GM13976 (cell line): ENCODE measurements at regions of chr15 and their contacts with region 1.

Region 1: GRCh38 chr15:50686468-50687301 is at the start of gene TRPM7:
- DNase-seq: peak; percentile 93
- CTCF ChIP-seq: no peak

Region 2: DNA sequence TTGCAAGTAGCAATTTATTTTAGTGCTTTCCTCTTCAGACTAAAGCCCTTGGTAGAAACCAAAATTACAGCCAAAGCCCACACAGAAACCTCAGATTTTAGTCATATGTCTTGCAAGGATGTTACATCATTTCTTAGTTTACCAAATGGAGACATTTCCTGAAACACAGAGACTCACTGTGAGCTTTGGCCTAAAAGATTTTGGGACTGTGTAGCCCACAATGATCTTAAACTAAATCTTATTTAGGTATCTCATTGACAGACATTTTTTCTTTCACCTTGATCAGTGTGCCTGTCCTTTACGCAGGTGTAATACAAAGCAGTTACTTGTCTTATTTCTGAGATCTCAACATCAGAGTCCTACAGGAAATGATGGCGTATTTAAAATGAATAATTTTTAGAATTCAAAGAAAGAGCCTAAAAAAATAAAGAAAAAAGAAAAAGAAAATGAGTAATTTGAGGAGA is 194.0 kb after region 1 on chr15:
- in situ Hi-C with region 1: loop called (anchors 10 kb)
- DNase-seq: peak; percentile 54
- CTCF ChIP-seq: no peak

Region 3: DNA sequence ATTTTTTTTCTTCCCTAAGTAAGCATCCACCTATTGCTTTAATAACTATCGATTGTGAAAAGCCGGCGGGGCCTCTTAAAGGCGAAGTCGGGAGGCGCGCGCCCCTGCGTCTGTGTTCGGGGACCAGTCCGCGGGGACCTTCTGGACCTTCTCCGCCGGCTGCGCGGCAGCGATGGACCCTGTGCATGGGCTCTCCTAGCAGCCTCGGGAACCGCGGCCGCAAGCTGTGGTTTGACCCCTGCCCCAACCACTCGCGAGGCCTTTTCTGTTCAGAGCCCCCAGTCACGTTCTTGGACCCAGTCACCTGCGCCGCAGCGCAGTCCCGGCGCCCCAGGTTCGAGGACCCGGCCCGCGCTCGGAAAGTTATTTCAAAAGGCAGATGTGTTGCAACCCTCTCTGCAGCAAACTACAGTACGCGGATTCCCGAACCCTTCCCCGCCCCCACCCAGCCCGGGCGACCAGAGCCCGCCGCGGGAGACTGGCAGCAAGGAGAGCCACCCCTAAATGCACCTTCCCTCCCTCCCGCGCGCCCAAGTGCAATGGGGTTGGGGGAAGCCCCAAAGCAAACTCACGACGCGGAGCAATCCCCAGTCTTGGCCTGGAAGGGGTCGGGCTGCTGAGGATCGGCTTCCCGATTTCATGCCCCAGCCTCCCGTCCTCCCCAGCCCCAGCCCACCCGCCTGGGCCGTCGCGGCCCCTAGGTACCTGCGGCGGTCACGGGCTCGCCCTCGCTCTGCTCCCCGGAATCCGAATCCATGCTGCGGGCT is 407.3 kb after region 1 on chr15:
- in situ Hi-C with region 1: no loop called
- DNase-seq: peak; percentile 72
- CTCF ChIP-seq: no peak